Heart left ventricle (tissue), 16 donors: ENCODE measurements at regions of chr13 and their contacts with region 1.

Region 1: GRCh38 chr13:40982772-40983171 is 36.3 kb downstream of the ELF1 start:
- DNase-seq: peak in 4 of 5 donors; percentile 33 to 73 (median 49)
- ATAC-seq: peak; percentile 64 to 88 (median 72)
- H3K4me3 ChIP-seq: peak overlapping the region in 11 of 12 donors; percentile 24 to 57 (median 45)
- H3K27ac ChIP-seq: peak overlapping the region; percentile 73 to 95 (median 82)
- H3K4me1 ChIP-seq: peaks cover 20 to 91% (median 56%) of the 10 kb centered on the region in 12 donors
- H3K27me3 ChIP-seq: no peaks in the 10 kb centered on the region
- CTCF ChIP-seq: no peak
- POLR2A ChIP-seq: peak in 1 of 2 donors; percentile 30

Region 2: DNA sequence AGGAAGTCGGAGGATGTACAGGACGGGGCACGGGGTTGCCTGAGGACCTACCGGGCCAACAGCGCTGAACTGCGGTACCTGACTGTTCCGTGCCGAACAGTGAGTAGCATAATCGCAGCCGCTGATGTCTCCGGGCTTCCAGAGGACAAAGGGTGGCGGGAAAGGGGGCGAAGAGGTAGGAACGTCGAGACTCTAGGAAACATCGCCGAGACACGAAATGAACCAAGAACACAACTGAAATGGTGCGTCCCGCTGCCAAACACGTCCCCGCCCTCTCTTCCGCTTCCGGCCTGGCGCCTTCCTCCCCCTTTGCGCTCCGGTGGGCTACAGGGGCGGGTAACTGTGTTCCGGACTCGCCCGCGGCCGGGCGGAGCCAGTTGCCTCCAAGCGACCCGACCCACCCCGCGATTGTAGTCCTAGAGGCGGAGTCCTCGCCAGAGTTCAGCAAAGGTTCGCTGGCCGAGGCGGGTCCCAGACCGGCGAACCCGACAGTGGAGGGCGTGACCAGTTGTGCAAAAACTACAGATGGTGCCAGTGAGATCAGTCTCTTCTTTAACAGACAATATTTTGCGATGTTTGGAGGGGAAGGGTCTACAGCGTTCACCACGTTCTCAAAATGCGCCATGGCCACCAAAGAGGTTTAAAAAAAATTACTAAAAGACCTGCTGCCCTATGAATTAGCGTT is 211.7 kb before region 1 on chr13 and contains the start of gene MRPS31:
- intact Hi-C with region 1: loop called in 1 of 10 experiments (anchors 10 kb)
- DNase-seq: peak; percentile 95 to 98 (median 97)
- ATAC-seq: peak; percentile 99 to 100 (median 100)
- H3K4me3 ChIP-seq: peak within 1 kb of the TSS; percentile 58 to 90 (median 75)
- H3K27ac ChIP-seq: peak within 1 kb of the TSS; percentile 63 to 92 (median 84)
- H3K4me1 ChIP-seq: peaks cover 0 to 25% (median 13%) of the 10 kb centered on the region in 12 donors
- H3K27me3 ChIP-seq: no peaks in the 10 kb centered on the region
- CTCF ChIP-seq: no peak
- POLR2A ChIP-seq: peak in 1 of 2 donors; percentile 63
- total RNA-seq, gene MRPS31: 21.9 to 33.1 (median 27.1) TPM

Region 3: DNA sequence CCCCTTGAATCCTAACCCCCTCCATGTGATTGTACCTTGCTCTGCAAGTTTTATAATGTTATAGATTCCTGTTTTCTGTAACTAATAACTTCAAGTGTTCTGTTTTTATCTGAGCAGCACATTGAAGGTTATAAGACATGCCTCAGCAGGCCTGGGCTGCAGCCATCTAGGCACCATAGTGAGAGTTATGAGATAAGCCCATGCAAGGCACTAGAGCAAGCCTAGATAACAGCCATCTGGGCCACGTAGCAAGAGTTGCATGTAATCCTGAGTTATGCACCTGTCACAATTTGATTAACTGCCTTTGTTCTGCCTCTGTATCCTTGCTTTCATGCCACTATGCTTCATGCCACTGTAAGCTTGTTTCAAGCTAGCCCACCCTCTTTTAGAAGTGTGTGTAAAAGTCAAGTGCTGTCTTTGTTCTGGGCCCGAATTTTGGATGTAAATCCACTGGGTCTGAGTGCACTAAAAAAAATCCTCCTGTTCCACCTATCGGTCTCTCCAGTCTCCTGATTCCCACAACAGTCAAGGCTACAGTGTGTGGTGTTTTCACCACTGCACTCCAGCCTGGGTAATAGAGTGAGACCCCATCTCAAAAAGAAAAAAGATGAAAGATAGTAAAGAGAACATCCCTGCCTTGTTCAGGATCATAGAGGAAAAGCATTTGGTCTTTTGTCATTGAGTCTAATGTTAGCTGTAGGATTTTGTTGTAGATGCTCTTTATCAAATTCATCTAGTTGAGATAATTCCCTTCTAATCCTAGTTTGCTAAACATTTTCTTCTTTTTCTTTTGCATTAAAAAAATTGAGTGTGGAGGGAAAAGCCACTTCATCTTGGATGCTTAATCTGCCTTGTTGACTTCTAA is 165.9 kb after region 1 on chr13:
- intact Hi-C with region 1: no loop called
- DNase-seq: no peak
- ATAC-seq: no peak
- H3K4me3 ChIP-seq: no peak overlapping the region
- H3K27ac ChIP-seq: no peak overlapping the region
- H3K4me1 ChIP-seq: no peaks in the 10 kb centered on the region
- H3K27me3 ChIP-seq: no peaks in the 10 kb centered on the region
- CTCF ChIP-seq: no peak
- POLR2A ChIP-seq: no peak